ENCODE measurements at regions of chr1 and their contacts with region 1.

Region 1: DNA sequence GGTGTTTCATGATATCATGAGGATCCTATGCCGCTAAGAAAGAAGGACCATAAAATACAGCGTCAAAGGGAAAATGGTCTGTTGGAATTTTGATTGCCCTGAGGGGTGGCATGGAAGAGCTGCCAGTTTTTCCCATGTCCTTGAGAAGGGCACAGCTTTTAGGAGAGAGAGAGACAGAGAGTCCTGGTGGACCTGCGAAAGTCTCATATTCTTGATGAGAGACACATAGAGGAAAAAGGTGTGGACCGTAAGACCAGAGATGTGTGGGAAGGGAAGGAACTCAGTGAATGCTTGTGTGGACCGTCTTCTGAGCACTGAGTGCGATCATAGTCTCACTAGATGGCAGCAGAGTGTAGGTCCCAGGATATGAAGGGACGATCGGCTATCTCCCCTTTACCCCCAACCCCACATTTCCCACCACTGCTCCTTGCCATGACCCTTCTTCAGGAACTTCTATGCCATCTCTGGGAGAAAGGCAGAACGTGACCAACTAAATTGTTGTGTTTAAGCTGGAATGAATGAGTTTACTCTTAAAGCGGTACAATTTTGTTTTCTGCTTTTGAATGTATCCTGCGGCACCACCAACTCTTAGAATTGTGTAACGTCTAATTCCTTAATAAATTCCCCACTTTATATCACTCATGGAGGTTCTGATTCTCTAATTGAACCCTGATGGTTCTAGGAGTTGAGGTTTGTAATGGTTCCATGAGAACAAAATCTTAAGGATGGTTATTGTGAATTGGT is 117.7 kb downstream of the CTH start:
- DNase-seq: peak in 1 of 2 experiments; percentile 7
- H3K4me3 ChIP-seq: no peak overlapping the region
- H3K27ac ChIP-seq: no peak overlapping the region
- H3K4me1 ChIP-seq: no peaks in the 10 kb centered on the region
- H3K27me3 ChIP-seq: no peaks in the 10 kb centered on the region
- CTCF ChIP-seq: peak; percentile 59

Region 2: DNA sequence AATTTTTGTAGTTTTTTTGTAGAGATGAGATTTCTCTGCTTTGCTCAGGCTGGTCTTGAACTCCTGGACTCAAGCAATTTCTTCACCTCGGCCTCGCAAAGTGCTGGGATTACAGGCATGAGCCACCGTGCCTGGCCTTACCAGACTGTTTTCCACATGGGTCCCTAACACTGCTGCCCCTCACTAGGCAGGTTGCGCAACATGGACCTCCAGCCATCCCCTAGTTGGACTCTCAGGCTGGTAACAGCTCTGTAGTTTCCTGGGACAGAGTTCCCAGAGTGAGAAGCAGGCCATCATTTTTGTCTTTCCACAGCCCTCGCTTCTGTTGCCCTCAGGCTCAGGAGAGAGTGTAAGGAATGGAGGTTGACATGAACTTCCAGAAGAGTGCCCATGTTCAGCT is 38.4 kb after region 1 on chr1:
- CTCF ChIA-PET with region 1: no interaction called
- POLR2A ChIA-PET with region 1: no interaction called
- intact Hi-C with region 1: no loop called
- DNase-seq: no peak
- H3K4me3 ChIP-seq: no peak overlapping the region
- H3K27ac ChIP-seq: no peak overlapping the region
- H3K4me1 ChIP-seq: no peaks in the 10 kb centered on the region
- H3K27me3 ChIP-seq: no peaks in the 10 kb centered on the region
- CTCF ChIP-seq: no peak

Region 3: DNA sequence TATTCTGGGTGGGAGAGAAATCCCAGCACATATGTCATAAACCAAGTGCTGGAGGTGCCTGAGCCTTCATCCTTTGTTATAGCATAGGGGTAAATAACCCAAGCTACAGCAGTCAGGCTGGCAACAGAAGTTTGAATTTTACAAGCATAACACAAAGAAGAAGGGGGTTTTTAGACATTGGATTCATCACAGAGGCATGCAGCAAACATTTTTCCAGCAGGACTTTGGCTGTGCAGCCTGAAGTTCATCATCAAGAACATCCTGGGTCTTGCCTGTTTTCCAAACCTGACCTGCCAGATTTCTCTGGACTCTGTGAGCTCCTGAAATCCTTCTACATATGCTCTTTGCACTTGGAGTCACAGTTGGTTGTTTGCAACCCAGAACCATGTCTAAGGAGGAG is 502.7 kb after region 1 on chr1:
- CTCF ChIA-PET with region 1: no interaction called
- POLR2A ChIA-PET with region 1: no interaction called
- intact Hi-C with region 1: loop called (anchors 5 kb)
- DNase-seq: no peak
- H3K4me3 ChIP-seq: no peak overlapping the region
- H3K27ac ChIP-seq: no peak overlapping the region
- H3K4me1 ChIP-seq: no peaks in the 10 kb centered on the region
- H3K27me3 ChIP-seq: no peaks in the 10 kb centered on the region
- CTCF ChIP-seq: no peak